GM10248 (cell line): ENCODE measurements at regions of chr9 and their contacts with region 1.

Region 1: GRCh38 chr9:136728080-136728547 is 14.6 kb downstream of the LCN10 start:
- DNase-seq: peak; percentile 95
- CTCF ChIP-seq: peak; percentile 95

Region 2: GRCh38 chr9:136707849-136708517 is 20.1 kb before region 1 on chr9:
- CTCF ChIA-PET with region 1: interaction called, 49 read pairs
- POLR2A ChIA-PET with region 1: interaction called, 36 read pairs
- DNase-seq: no peak
- CTCF ChIP-seq: no peak

Region 3: DNA sequence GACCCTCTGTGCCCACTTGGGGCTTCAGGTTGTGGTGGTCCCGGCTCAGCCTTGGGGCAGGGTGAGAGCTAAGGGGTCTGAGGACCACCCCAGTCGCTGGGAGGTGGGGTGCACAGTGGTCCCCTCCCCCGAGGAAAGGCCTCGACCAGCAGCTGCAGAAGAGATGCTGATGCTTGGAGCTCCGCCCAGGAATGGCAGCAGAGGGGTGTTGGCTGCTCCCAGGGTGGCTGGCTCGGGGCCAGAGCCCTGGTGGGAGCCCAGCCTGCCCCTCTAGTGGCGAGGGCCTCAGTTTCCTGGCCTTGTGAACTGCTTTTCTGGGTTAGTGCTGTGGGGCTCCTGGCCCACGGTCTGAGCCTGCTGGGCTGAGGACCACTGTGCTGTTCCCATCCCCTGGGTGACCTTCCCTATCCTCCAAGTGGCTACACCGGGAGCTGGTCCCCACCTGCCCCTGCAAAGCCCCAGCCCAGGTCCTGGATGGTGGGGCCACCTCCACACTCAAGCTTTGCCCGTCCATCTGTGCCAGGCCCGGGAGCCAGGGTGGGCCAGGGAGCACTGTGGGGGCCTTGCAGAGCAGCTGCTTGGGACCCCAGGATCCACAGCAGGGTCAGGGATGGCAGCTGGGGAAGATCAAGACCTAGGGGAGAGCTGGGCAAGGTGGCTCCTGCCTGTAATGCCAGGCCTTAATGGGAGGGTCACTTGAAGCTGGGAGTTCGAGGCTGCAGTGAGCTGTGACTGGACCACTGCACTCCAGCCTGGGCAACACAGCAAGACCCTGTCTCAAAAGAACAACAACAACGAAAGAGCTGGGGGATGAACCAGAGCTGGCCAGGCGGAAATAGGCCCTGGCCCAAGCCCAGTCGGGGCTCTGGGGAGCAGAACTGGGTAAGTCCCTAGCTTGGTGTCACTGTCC is 14.3 kb before region 1 on chr9:
- CTCF ChIA-PET with region 1: interaction called, 49 read pairs
- POLR2A ChIA-PET with region 1: interaction called, 36 read pairs
- DNase-seq: no peak
- CTCF ChIP-seq: no peak

Region 4: DNA sequence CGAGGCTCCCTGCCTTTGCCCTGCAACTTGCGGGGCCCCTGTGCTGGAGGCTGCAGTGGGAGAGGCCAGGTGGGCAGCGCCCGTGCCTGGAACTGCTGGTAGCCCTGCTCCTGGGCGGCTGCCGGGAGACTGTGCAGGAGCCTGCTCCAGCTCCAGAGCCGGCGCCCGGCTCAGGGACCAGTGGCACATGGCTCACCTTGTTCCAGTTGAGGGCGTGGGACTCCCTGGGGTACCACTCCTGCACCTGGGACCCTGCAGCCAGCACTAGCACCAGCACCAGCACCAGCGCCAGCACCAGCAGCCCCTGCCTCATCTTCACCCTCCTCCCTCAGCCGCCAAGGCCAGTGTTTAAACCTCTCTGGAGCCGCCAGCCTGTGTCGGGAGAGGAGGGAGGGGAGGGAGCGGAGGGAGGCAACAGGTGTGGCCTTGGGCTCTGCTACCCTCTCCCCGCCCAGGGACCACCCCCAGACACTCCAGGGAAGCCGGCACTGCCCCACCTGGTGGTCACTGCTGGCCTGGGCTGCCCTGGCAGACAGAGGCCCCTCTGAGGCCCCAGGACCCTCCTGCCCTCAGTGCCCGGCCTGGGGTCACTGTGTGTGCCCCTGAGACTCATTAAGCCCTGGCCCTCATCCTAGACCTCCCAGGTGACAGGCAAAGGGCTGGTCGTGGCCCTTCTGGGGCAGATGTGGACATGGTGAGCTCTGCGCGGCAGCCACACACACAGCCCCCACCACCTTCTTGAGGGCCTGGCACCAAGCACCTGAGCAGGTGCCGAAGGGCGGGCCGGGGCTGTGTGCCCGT is 14.7 kb after region 1 on chr9 and contains the start of gene LCN10:
- CTCF ChIA-PET with region 1: interaction called, 27 read pairs
- POLR2A ChIA-PET with region 1: interaction called, 18 read pairs
- DNase-seq: no peak
- CTCF ChIP-seq: no peak

Region 5: GRCh38 chr9:136757328-136757727 is 29.2 kb after region 1 on chr9:
- CTCF ChIA-PET with region 1: interaction called, 20 read pairs
- POLR2A ChIA-PET with region 1: interaction called, 4 read pairs
- DNase-seq: no peak
- CTCF ChIP-seq: no peak

Region 6: DNA sequence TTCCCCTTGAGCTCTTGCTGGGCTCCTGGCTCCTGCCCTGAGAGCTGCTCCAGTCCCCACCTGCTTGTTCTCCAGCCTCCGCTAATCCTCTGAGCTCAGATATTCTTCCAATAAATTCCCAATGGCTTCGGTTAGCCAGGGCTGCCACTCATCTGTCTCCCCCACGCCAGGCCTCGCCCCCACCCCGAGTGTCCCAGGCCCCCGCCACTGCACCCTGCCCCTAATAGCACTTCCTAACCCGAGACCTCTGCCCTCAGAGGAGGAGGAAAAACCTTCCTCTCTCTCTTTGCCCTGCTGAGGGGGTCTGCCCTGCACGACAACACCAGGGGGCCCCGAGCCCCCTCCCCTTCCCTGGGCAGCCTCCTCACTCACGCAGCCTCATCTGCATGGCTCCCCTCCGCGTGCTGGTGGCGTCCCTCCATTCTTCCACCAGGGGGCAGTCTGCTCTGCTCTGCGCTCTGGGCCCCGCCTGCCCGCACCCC is 41.6 kb after region 1 on chr9:
- CTCF ChIA-PET with region 1: interaction called, 13 read pairs
- POLR2A ChIA-PET with region 1: no interaction called
- DNase-seq: peak; percentile 76
- CTCF ChIP-seq: peak; percentile 74

Region 7: GRCh38 chr9:137070201-137070905 is 342.2 kb after region 1 on chr9 and contains the start of gene SAPCD2:
- CTCF ChIA-PET with region 1: no interaction called
- POLR2A ChIA-PET with region 1: no interaction called
- DNase-seq: peak; percentile 94
- CTCF ChIP-seq: no peak

Region 8: DNA sequence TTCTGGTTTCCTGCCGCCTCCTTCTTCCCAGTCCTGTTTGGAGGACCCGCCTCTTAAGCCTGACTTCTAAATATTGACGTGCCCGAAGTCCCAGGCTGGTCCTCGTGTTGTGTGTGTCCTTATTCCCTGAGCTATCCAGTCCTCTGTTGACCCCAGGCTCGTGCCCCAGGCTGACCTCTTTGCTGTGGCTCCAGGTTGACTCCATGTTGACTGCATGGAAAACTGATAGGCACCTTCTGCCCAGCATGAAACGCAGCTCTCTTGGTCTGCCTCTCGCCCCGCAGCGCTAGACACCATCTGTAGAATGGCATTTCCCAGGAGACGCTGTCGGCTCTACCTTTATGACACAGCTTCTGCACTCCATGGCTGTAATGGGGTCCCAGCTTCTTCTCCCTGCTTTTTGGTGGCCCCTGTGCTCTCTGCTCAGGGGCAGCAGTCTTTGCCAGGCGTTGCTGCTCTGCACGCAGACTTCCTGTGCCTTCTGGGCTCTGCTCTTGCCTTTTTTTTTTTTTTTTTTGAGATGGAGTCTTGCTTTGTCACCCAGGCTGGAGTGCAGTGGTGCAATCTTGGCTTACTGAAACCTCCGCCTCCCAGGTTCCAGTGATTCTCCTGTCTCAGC is 919.1 kb after region 1 on chr9:
- CTCF ChIA-PET with region 1: no interaction called
- POLR2A ChIA-PET with region 1: no interaction called
- DNase-seq: no peak
- CTCF ChIP-seq: no peak